ENCODE measurements at regions of chr2 and their contacts with region 1.

Region 1: GRCh38 chr2:120252225-120253021 is at the start of gene RALB:
- DNase-seq: peak; percentile 99
- H3K4me3 Mint-ChIP-seq: peak within 1 kb of the TSS; percentile 96
- H3K27ac Mint-ChIP-seq: peak within 1 kb of the TSS; percentile 74
- H3K4me1 Mint-ChIP-seq: peaks cover 40% of the 10 kb centered on the region
- H3K27me3 Mint-ChIP-seq: no peaks in the 10 kb centered on the region
- total RNA-seq, gene RALB: 16.4 to 19.3 TPM

Region 2: DNA sequence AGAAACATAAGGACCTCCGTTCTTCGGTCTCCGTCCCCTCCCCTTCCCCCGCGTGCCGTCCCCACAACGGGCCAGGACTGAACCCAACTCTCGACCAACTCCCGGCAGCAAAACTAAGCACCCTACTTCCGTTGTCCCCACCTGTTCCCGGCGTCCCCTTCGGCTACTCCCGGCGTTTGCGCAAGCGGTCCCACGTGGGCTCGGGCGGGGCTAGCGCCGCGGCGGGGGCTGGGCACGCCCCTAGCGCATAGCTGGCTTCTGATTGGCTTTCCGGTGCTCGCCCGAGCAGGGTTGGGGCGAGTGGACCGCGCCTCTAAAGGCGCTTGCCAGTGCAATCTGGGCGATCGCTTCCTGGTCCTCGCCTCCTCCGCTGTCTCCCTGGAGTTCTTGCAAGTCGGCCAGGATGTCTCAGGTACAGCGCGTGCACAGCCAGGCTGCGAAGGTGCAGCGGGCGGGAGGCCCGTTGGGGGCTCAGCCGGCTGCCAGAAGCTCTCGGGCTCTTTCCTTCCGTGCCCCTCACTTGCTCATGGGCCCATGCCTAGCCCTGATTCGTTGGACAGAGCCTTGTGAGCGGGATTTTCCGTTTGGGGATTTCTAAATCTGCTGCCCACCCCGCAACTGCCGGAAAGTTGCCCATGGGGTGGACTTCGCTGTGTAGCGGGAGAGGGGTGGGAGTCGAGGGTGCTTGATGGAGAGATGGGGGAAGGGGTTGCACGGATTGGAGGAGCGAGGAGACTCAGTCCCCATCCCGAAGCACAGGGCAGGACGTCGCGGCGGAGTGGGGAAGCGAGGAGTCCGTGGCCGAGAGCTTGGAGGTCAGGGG is 885.6 kb before region 1 on chr2 and contains the starts of genes C2orf76 and DBI:
- CTCF ChIA-PET with region 1: no interaction called
- intact Hi-C with region 1: loop called (anchors 10 kb)
- DNase-seq: peak; percentile 94
- H3K4me3 Mint-ChIP-seq: peak within 1 kb of the TSS; percentile 99
- H3K27ac Mint-ChIP-seq: peak within 1 kb of the TSS; percentile 92
- H3K4me1 Mint-ChIP-seq: peaks cover 42% of the 10 kb centered on the region
- H3K27me3 Mint-ChIP-seq: no peaks in the 10 kb centered on the region
- total RNA-seq, gene C2orf76: 9.5 to 11.1 TPM
- total RNA-seq, gene DBI: 133 to 134 TPM

Region 3: GRCh38 chr2:120012771-120013596 is 239.4 kb before region 1 on chr2 and contains the start of gene EPB41L5:
- CTCF ChIA-PET with region 1: no interaction called
- intact Hi-C with region 1: loop called (anchors 2 kb)
- DNase-seq: peak; percentile 79
- H3K4me3 Mint-ChIP-seq: peak within 1 kb of the TSS; percentile 77
- H3K27ac Mint-ChIP-seq: no peak within 1 kb of the TSS
- H3K4me1 Mint-ChIP-seq: peaks cover 8% of the 10 kb centered on the region
- H3K27me3 Mint-ChIP-seq: no peaks in the 10 kb centered on the region
- total RNA-seq, gene EPB41L5: 2.3 to 2.5 TPM

Region 4: DNA sequence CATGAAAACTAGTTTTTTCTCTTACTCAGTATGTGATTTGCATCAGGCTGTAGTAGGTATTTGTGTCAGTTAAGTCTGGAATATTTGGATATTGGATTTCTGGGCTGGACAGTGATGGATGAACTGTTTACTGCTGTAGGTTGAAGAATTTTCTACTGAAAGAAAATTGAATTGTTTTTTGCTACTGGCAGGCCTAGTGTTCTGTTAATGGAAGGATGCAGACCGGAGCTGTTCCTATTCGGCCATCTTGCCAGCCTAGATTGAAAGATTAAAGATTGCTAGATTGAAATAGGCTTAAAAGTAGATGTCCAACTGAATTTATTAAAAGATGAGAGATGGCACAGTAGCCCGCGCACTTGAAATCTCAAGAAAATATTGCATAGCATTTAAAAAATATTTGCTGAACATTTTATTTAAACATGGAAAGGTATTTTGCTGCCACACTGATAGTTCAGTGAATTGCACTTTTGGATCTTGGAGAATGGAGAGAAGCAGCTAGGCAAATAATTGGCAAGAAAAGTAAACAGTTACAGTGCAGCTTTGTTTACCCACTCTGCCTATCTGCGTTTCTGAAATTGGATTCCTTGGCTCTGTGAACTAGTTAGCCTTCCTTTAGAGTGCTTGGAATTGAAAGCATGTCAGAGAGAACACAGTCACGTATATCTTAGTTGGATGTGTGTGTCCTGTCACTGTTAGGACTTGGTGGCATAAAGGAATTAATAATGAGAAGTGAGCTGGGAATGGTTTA is 185.4 kb before region 1 on chr2:
- CTCF ChIA-PET with region 1: no interaction called
- intact Hi-C with region 1: no loop called
- DNase-seq: no peak
- H3K4me3 Mint-ChIP-seq: no peak overlapping the region
- H3K27ac Mint-ChIP-seq: no peak overlapping the region
- H3K4me1 Mint-ChIP-seq: peaks cover 2% of the 10 kb centered on the region
- H3K27me3 Mint-ChIP-seq: no peaks in the 10 kb centered on the region

Region 5: DNA sequence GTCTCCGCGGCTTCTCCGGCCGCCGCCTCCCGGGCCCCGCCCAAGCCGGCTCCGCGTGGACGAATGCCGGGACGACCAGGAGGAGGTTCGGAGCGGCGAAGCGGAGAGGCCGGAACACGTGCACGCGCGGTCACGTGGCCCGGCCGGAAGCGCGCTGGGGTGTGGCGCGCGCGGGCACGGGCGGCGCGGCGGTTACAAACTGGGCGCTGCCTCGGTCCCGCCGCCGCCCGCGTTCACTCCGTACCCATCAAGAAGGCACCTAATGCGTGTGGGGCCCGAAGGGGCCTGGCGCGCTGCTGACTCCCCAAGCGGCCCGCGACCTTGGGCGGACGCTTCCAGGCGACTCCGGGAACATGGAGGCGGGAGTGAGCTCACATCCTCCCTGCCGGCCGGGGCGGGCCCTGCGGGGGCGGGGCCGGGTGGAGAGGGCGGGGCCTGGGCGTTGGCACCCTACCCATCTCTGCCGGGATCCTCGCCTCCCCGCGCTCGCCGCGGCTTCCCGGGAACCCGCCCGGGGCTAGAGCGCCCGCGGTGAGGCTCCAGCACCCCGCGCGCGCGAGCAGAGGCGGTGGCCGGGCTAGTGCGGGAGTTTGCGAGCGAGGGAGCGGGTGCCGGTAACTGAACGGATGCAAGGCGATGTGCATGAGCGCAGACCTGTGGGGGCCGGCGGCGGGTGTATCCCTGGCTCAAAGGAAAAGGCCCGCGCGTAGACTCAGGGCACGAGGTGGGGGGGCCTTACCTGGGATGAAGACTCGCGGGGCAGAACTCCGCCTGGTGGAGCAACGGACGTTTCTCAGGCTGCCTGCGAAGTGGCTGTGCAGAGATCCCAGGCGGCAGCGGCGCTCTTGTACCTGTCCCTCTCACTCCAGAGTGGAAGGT is 29.1 kb before region 1 on chr2 and contains the start of gene TMEM185B:
- CTCF ChIA-PET with region 1: interaction called, 3 read pairs
- intact Hi-C with region 1: loop called (anchors 1 kb)
- DNase-seq: peak; percentile 93
- H3K4me3 Mint-ChIP-seq: peak within 1 kb of the TSS; percentile 80
- H3K27ac Mint-ChIP-seq: peak within 1 kb of the TSS; percentile 87
- H3K4me1 Mint-ChIP-seq: peaks cover 43% of the 10 kb centered on the region
- H3K27me3 Mint-ChIP-seq: no peaks in the 10 kb centered on the region
- total RNA-seq, gene TMEM185B: 11.4 to 12.2 TPM

Region 6: GRCh38 chr2:120287183-120288015 is 35.0 kb after region 1 on chr2:
- CTCF ChIA-PET with region 1: no interaction called
- intact Hi-C with region 1: loop called (anchors 1 kb)
- DNase-seq: peak; percentile 58
- H3K4me3 Mint-ChIP-seq: no peak overlapping the region
- H3K27ac Mint-ChIP-seq: peak overlapping the region; percentile 55
- H3K4me1 Mint-ChIP-seq: peaks cover 23% of the 10 kb centered on the region
- H3K27me3 Mint-ChIP-seq: no peaks in the 10 kb centered on the region